Activated CD4-positive, alpha-beta memory T cell treated with anti-CD3 and anti-CD28 coated beads, Interleukin-2, amount 10 ng/mL, durations not matched to agents 7 days and 5 days (primary cell): ENCODE measurements at regions of chr17 and their contacts with region 1.

Region 1: GRCh38 chr17:17303010-17303846 is at the start of gene NT5M:
- DNase-seq: peak; percentile 81
- H3K4me3 Mint-ChIP-seq: peak within 1 kb of the TSS; percentile 82
- H3K27ac Mint-ChIP-seq: peak within 1 kb of the TSS; percentile 93
- H3K4me1 Mint-ChIP-seq: peaks cover 44% of the 10 kb centered on the region
- H3K27me3 Mint-ChIP-seq: peaks cover 2% of the 10 kb centered on the region
- total RNA-seq, gene NT5M: 8.4 to 9.7 TPM

Region 2: GRCh38 chr17:17237026-17237799 is 66.0 kb before region 1 on chr17 and contains the start of gene FLCN:
- CTCF ChIA-PET with region 1: interaction called, 4 read pairs
- POLR2A ChIA-PET with region 1: interaction called, 12 read pairs
- DNase-seq: peak; percentile 89
- H3K4me3 Mint-ChIP-seq: peak within 1 kb of the TSS; percentile 96
- H3K27ac Mint-ChIP-seq: peak within 1 kb of the TSS; percentile 91
- H3K4me1 Mint-ChIP-seq: peaks cover 37% of the 10 kb centered on the region
- H3K27me3 Mint-ChIP-seq: no peaks in the 10 kb centered on the region
- total RNA-seq, gene FLCN: 48.8 to 53.1 TPM